Activated naive CD8-positive, alpha-beta T cell treated with anti-CD3 and anti-CD28 coated beads, Interleukin-2, amount 10 ng/mL, durations not matched to agents 7 days and 5 days (primary cell): ENCODE measurements at regions of chr4 and their contacts with region 1.

Region 1: GRCh38 chr4:39458505-39459300 is at the starts of genes LIAS and RPL9:
- DNase-seq: peak; percentile 90
- ATAC-seq: peak; percentile 89
- H3K4me3 Mint-ChIP-seq: peak within 1 kb of the TSS; percentile 95
- H3K27ac Mint-ChIP-seq: peak within 1 kb of the TSS; percentile 97
- H3K4me1 Mint-ChIP-seq: peaks cover 41% of the 10 kb centered on the region
- H3K27me3 Mint-ChIP-seq: no peaks in the 10 kb centered on the region
- total RNA-seq, gene LIAS: 16.0 to 18.0 TPM
- total RNA-seq, gene RPL9: 1,040 to 1,200 TPM

Region 2: DNA sequence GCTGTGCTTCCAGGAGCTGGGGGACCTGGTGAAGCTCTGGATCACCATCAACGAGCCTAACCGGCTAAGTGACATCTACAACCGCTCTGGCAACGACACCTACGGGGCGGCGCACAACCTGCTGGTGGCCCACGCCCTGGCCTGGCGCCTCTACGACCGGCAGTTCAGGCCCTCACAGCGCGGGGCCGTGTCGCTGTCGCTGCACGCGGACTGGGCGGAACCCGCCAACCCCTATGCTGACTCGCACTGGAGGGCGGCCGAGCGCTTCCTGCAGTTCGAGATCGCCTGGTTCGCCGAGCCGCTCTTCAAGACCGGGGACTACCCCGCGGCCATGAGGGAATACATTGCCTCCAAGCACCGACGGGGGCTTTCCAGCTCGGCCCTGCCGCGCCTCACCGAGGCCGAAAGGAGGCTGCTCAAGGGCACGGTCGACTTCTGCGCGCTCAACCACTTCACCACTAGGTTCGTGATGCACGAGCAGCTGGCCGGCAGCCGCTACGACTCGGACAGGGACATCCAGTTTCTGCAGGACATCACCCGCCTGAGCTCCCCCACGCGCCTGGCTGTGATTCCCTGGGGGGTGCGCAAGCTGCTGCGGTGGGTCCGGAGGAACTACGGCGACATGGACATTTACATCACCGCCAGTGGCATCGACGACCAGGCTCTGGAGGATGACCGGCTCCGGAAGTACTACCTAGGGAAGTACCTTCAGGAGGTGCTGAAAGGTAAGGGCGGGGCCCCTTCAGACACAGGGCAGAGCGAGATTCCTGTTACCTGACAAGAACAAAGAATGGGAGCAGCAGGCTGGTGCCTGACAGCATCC is 11.7 kb before region 1 on chr4:
- POLR2A ChIA-PET with region 1: interaction called, 15 read pairs
- DNase-seq: peak; percentile 62
- ATAC-seq: peak; percentile 90
- H3K4me3 Mint-ChIP-seq: peak overlapping the region; percentile 63
- H3K27ac Mint-ChIP-seq: peak overlapping the region; percentile 34
- H3K4me1 Mint-ChIP-seq: peaks cover 10% of the 10 kb centered on the region
- H3K27me3 Mint-ChIP-seq: peaks cover 2% of the 10 kb centered on the region

Region 3: GRCh38 chr4:39480902-39481695 is 22.4 kb after region 1 on chr4:
- POLR2A ChIA-PET with region 1: no interaction called
- DNase-seq: no peak
- ATAC-seq: no peak
- H3K4me3 Mint-ChIP-seq: no peak overlapping the region
- H3K27ac Mint-ChIP-seq: no peak overlapping the region
- H3K4me1 Mint-ChIP-seq: no peaks in the 10 kb centered on the region
- H3K27me3 Mint-ChIP-seq: no peaks in the 10 kb centered on the region

Region 4: GRCh38 chr4:39638354-39639240 is 179.9 kb after region 1 on chr4 and contains the start of gene SMIM14:
- POLR2A ChIA-PET with region 1: interaction called, 16 read pairs
- DNase-seq: peak; percentile 87
- ATAC-seq: peak; percentile 87
- H3K4me3 Mint-ChIP-seq: peak within 1 kb of the TSS; percentile 93
- H3K27ac Mint-ChIP-seq: peak within 1 kb of the TSS; percentile 83
- H3K4me1 Mint-ChIP-seq: peaks cover 15% of the 10 kb centered on the region
- H3K27me3 Mint-ChIP-seq: peaks cover 1% of the 10 kb centered on the region
- total RNA-seq, gene SMIM14: 7.0 to 7.2 TPM